ENCODE measurements at regions of chr22 and their contacts with region 1.

Region 1: DNA sequence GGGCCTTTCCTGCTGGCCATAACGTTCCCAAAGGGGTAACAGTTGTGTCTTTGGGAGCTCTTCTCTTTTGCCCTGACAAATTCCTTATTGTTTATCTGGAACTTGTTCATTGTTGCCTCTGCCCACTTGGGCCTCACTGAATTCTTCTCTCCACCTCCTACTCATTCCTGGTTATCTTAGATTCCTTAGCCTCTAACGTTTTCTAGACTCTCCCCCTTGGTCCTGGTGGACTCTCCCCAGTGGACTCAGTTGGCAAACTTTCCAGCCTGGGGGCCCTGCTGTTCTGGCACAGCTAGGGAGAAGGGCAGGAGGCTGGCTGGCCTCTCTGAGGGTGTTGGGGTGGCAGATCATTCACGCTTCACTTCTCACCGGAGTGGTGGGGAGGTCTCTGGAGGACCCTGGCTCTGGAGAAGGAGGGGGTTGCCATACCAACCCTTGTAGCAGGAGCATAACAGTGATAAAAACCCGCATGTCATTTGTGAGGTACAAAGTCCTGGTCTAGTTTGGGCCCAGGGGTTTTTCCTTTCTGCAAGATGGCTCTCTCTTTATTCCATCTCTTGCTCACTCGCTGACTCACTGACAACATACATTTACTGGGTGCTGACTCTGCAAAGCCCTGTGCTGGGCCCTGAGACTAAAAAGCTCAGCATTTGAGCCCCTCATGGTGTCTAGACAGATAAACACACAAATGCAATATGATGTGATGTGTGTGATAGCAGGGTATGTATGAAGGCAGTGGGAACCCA is 39.7 kb downstream of the YWHAH start:
- DNase-seq: no peak
- ATAC-seq: no peak
- H3K4me3 ChIP-seq: no peak overlapping the region
- H3K27ac ChIP-seq: no peak overlapping the region
- H3K4me1 ChIP-seq: no peaks in the 10 kb centered on the region
- H3K27me3 ChIP-seq: no peaks in the 10 kb centered on the region
- CTCF ChIP-seq: no peak
- POLR2A ChIP-seq: no peak

Region 2: GRCh38 chr22:31211862-31212730 is 772.0 kb before region 1 on chr22 and contains the start of gene LIMK2:
- in situ Hi-C with region 1: no loop called
- intact Hi-C with region 1: no loop called
- DNase-seq: peak; percentile 87 to 92
- ATAC-seq: peak; percentile 81 to 87
- H3K4me3 ChIP-seq: peak within 1 kb of the TSS; percentile 72 to 91 (median 85)
- H3K27ac ChIP-seq: peak within 1 kb of the TSS; percentile 85 to 88 (median 87)
- H3K4me1 ChIP-seq: peaks cover 20 to 24% of the 10 kb centered on the region in 2 donors
- H3K27me3 ChIP-seq: no peaks in the 10 kb centered on the region
- CTCF ChIP-seq: peak; percentile 69 to 92 (median 75)
- POLR2A ChIP-seq: peak; percentile 80 to 84
- total RNA-seq, gene LIMK2: 4.0 to 12.6 (median 7.1) TPM

Region 3: DNA sequence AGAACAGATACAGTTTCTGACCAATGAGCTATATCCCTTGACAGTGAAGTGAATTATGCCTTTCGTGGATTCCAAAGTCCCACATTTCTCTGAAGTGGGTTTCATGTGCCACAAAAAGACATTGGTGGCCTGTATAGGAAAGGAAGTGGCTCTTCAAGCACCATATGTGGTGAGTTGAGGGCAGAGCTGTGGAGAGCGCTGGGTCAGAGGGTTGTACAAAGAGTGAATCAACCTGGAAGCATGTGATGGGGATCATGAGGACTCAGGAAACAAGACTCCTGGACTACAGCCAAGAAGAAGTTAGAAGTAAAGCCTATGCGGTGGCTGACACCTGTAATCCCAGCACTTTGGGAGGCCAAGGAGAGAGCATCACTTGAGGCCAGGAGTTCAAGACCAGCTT is 271.6 kb after region 1 on chr22:
- in situ Hi-C with region 1: loop called in 3 of 4 experiments (anchors 5 to 25 kb)
- intact Hi-C with region 1: no loop called
- DNase-seq: no peak
- ATAC-seq: no peak
- H3K4me3 ChIP-seq: no peak overlapping the region
- H3K27ac ChIP-seq: no peak overlapping the region
- H3K4me1 ChIP-seq: no peaks in the 10 kb centered on the region
- H3K27me3 ChIP-seq: no peaks in the 10 kb centered on the region
- CTCF ChIP-seq: no peak
- POLR2A ChIP-seq: no peak

Region 4: DNA sequence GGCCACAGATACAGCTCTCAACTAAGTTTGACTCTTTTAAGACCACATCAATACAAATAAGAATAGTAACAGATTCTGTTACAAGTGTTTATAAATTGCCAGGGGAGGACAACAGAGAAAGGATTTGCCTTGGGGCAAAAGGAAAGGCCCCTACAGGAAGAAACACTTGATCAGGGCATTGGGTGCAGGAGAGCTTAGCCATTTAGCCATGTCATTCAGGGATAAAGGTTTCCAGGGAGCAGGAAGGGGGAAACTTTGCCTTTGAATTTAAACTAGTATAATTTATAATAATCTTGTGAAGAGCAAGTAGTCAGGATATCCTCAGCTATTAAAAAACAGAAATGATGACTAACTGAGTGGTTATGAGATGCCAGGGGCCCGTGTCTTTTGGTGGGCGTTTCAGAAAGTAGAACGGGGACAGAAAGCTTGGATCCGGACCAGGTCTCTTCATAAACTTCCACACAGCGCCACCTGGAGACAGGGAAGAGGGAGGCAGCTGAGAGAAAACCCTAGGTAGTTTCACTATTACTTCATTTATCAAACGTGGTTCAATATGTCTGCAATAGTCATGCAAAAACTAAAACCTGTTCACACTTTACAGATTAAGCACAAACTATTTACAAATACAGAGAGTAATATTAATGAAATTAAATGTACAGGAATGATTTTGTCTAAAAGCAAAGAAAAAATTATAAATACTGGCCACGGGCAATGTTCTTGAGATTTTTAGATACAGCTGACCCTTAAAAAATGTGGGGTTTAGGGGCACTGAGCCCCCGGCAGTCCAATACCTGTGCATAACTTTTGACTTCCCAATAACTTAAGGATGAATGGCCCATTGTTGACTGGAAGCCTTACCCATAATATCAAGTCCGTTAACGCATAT is 282.0 kb after region 1 on chr22:
- in situ Hi-C with region 1: loop called in 3 of 4 experiments (anchors 5 to 25 kb)
- intact Hi-C with region 1: no loop called
- DNase-seq: peak; percentile 15 to 50
- ATAC-seq: peak; percentile 58 to 79
- H3K4me3 ChIP-seq: peak overlapping the region in 3 of 4 donors; percentile 17 to 25 (median 21)
- H3K27ac ChIP-seq: peak overlapping the region in 2 of 4 donors; percentile 9 to 23
- H3K4me1 ChIP-seq: peaks cover 3 to 4% of the 10 kb centered on the region in 2 donors
- H3K27me3 ChIP-seq: no peaks in the 10 kb centered on the region
- CTCF ChIP-seq: peak; percentile 56 to 79 (median 66)
- POLR2A ChIP-seq: no peak

Measured in gastrocnemius medialis (tissue), 4 donors.